Spleen (tissue), 13 donors: ENCODE measurements at regions of chr11 and their contacts with region 1.

Region 1: DNA sequence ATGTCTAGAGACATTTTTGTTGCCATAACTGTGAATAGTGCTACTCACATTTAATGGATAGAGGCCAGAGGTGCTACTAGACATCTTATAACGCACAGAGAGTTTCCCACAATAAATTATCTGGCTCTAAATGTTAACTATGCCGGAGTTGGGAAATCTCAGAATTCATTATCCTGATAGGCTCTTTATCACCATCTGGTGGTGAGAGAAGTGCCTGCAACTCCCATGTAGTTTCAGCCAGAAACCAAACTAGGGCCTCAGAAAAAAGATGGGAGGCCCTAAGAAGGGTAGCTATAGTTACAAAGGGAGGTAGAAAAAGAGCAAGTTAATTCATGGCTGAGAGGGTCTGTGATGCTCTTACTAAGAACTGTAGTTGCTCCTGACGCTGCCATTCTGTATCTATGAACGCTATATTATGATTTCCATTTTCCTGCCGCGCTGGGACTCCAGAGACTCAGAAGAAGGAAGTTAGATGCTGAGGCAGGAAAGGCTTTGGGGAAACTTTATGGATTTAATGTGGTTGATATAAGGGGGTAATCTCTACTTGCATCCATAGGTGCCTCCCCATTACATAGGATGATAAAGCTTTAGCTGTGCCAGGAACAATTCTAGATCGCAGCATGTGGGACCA is 22.9 kb upstream of the MRPL17 start:
- DNase-seq: no peak
- H3K4me3 ChIP-seq: no peak overlapping the region
- H3K27ac ChIP-seq: peak overlapping the region in 5 of 8 donors; percentile 4 to 48 (median 28)
- H3K4me1 ChIP-seq: peaks cover 0 to 46% (median 24%) of the 10 kb centered on the region in 6 donors
- H3K27me3 ChIP-seq: no peaks in the 10 kb centered on the region
- CTCF ChIP-seq: peak; percentile 59 to 92 (median 86)
- POLR2A ChIP-seq: no peak

Region 2: GRCh38 chr11:6377902-6378639 is 327.9 kb before region 1 on chr11:
- intact Hi-C with region 1: no loop called
- DNase-seq: no peak
- H3K4me3 ChIP-seq: peak overlapping the region in 1 of 8 donors; percentile 29
- H3K27ac ChIP-seq: peak overlapping the region in 5 of 8 donors; percentile 1 to 77 (median 42)
- H3K4me1 ChIP-seq: peaks cover 0 to 27% (median 18%) of the 10 kb centered on the region in 6 donors
- H3K27me3 ChIP-seq: no peaks in the 10 kb centered on the region
- CTCF ChIP-seq: no peak
- POLR2A ChIP-seq: no peak

Region 3: GRCh38 chr11:6531267-6531752 is 174.7 kb before region 1 on chr11:
- intact Hi-C with region 1: loop called (anchors 5 kb)
- DNase-seq: no peak
- H3K4me3 ChIP-seq: no peak overlapping the region
- H3K27ac ChIP-seq: no peak overlapping the region
- H3K4me1 ChIP-seq: peaks cover 0 to 7% (median 0%) of the 10 kb centered on the region in 6 donors
- H3K27me3 ChIP-seq: no peaks in the 10 kb centered on the region
- CTCF ChIP-seq: peak; percentile 47 to 89 (median 71)
- POLR2A ChIP-seq: no peak

Region 4: GRCh38 chr11:6757373-6757967 is 51.5 kb after region 1 on chr11:
- intact Hi-C with region 1: loop called (anchors 10 kb)
- DNase-seq: peak; percentile 65
- H3K4me3 ChIP-seq: no peak overlapping the region
- H3K27ac ChIP-seq: no peak overlapping the region
- H3K4me1 ChIP-seq: peaks cover 0 to 7% (median 2%) of the 10 kb centered on the region in 6 donors
- H3K27me3 ChIP-seq: no peaks in the 10 kb centered on the region
- CTCF ChIP-seq: peak; percentile 49 to 79 (median 62)
- POLR2A ChIP-seq: no peak

Region 5: DNA sequence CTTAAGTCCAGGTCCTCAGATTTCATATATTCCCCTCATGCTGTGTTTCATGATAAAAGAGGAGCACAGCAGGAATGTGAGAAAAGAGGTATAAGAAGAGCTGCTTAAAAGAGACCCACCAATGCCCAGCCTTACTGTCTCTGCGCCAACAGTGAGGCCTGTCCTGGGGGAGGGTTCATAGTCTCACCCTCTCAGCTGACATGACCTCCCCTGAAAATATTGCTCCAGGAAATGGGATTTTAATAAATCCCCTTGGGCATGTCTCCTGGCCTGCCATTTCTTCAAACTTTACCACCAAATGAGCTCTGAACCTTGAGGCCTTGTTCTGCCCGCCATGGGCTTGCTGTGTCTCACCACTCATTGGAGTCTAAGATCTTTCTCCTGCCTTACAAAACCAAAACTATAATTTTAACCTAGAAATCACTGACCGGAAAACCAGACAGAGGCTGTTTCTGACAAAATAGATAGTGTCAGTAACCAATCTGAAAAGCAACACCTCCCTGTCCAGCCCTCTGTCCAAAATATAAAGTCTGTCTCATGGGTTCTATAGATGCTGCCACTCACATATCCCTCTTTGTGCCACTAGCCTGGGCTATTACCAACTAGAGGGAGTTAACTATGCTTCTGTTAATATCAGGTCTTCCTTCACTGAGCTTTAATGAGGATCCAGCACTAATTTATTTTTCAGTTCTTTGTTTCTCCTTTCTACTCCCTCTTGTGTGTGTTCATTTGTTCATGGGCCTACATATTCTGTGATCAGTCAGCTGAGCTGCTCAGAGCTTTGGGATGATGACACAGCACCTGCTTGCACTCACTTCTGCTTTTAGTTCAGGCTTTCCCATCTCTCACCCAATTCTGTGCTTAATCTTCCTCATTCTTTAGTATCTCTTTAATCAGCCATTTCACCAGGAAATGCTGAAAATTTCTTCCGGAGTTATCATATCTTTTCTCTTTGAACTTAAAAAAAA is 66.2 kb after region 1 on chr11 and contains the start of gene OR2AG2:
- intact Hi-C with region 1: no loop called
- DNase-seq: no peak
- H3K4me3 ChIP-seq: no peak within 1 kb of the TSS
- H3K27ac ChIP-seq: peak within 1 kb of the TSS in 4 of 8 donors; percentile 21 to 70 (median 60)
- H3K4me1 ChIP-seq: peaks cover 0 to 11% (median 4%) of the 10 kb centered on the region in 6 donors
- H3K27me3 ChIP-seq: no peaks in the 10 kb centered on the region
- CTCF ChIP-seq: no peak
- POLR2A ChIP-seq: no peak
- total RNA-seq, gene OR2AG2: 0.15 to 0.34 (median 0.20) TPM in 5 of 7 donors, not detected in the others